Gastrocnemius medialis (tissue), 4 donors: ENCODE measurements at regions of chr17 and their contacts with region 1.

Region 1: DNA sequence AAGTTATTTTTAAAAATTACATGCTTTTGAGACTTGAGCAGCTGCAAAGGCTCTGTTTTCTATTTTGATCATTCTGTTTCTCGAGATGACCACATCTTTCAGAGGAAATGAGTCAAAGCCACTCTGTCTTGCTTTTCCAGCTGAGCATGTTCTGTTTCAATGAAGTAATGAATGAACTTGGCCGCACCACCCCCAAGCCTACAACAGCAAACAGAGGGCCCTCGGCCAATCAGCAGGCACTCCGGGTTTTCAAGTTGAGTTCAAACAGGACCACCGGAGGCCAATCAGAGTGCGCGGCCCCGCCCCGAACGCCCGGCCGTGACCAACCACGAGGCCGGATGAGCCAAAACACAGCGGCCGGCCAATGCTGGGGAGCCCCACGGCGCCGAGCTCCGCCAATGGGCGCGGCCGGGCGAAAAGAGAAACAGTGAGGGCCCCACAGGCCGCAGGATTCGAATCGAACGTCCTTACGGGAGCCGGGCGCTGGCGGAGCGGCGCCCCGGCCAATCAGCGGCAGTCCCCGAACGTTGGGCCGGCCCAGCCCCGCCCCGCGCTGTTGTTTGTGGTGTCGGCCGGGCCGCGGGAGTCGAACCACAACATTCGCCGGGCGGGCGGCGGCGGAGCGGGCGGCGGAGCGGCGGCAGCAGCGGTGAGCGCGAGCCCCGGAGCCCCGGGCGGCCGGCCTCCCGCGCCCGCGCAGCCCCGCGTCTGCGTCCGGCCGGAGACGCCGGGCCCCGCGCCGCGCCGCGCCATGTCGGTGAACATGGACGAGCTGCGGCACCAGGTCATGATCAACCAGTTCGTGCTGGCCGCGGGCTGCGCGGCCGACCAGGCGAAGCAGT is at the start of gene UBALD2:
- DNase-seq: peak; percentile 99 to 100
- ATAC-seq: peak; percentile 78 to 79
- H3K4me3 ChIP-seq: peak within 1 kb of the TSS; percentile 66 to 89 (median 80)
- H3K27ac ChIP-seq: peak within 1 kb of the TSS; percentile 90 to 98 (median 95)
- H3K4me1 ChIP-seq: peaks cover 52 to 58% of the 10 kb centered on the region in 2 donors
- H3K27me3 ChIP-seq: no peaks in the 10 kb centered on the region
- CTCF ChIP-seq: peak in 1 of 5 experiments; percentile 27
- POLR2A ChIP-seq: peak; percentile 96 to 98
- total RNA-seq, gene UBALD2: 28.9 to 151 (median 52.2) TPM

Region 2: DNA sequence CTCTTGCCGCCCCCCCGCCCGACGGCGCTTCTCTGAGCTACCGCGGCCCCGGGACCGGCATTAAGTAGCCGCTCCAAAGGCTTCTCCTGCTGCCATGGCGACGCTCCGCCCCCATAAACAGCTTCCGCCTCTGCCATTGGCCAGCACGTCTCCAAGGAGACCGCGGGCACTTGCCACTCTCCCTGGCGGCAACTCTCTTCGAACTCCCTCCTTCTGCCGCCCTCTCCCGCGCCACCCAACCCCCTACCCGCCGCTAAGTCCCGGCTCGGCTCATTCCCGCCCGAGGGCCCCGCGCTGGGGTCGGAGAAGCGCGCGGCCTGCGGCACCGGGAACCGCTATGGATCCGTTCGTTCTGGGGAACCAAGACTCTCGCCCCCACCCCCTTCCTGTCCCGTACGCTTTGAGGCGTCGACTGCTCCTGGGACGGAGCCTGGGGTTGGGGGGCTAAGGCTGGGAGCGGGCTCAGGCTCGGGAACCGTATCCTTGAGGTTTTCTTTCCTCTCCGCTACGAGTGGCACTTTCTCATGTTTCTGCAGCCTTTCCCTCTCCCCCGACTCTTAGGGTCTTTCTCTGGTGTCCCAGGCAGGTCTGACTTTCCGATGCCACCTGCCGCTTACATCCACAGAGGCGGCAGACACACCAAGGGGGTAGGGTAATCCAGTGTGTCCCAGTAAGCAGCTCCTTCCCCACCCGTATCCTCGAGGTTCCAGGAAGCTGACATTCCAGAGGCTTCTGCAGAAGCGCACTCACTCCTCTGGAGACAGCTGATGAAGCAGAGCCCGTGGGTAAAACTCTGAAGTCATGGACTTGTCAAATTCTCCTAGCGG is 123.6 kb before region 1 on chr17 and contains the start of gene FOXJ1:
- in situ Hi-C with region 1: no loop called
- intact Hi-C with region 1: no loop called
- DNase-seq: peak; percentile 69 to 86
- ATAC-seq: peak; percentile 84 to 89
- H3K4me3 ChIP-seq: peak within 1 kb of the TSS; percentile 50 to 68 (median 58)
- H3K27ac ChIP-seq: peak within 1 kb of the TSS in 1 of 4 donors; percentile 3
- H3K4me1 ChIP-seq: peaks cover 23 to 28% of the 10 kb centered on the region in 2 donors
- H3K27me3 ChIP-seq: peaks cover 46% of the 10 kb centered on the region in 3 donors
- CTCF ChIP-seq: no peak
- POLR2A ChIP-seq: no peak
- total RNA-seq, gene FOXJ1: 0.16 to 0.62 TPM in 2 of 4 donors, not detected in the others

Region 3: DNA sequence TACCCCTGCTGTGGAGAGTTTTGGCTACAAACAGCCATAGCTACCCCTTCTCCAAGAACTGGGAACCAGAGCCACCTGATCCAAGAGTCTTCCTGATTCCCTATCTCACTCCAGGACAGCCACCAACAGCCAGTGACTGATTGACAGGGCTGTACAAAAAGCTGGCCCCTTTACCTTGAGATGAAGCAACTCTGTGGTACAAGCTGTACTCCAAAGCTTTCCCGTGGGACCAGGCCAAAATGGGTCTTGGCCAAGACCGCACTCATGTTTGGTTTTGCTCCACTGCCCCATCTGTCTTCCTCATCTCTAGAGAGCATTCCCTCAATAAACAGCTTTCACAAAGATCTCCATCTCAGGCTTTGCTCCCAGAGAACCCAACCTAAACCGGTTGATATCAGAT is 68.3 kb before region 1 on chr17:
- in situ Hi-C with region 1: no loop called
- intact Hi-C with region 1: loop called (anchors 5 kb)
- DNase-seq: peak; percentile 93 to 97
- ATAC-seq: peak; percentile 98 to 100
- H3K4me3 ChIP-seq: peak overlapping the region in 1 of 4 donors; percentile 3
- H3K27ac ChIP-seq: peak overlapping the region; percentile 87 to 94 (median 90)
- H3K4me1 ChIP-seq: peaks cover 28 to 43% of the 10 kb centered on the region in 2 donors
- H3K27me3 ChIP-seq: no peaks in the 10 kb centered on the region
- CTCF ChIP-seq: peak in 3 of 5 experiments; percentile 21 to 35 (median 24)
- POLR2A ChIP-seq: peak in 1 of 2 donors; percentile 19

Region 4: DNA sequence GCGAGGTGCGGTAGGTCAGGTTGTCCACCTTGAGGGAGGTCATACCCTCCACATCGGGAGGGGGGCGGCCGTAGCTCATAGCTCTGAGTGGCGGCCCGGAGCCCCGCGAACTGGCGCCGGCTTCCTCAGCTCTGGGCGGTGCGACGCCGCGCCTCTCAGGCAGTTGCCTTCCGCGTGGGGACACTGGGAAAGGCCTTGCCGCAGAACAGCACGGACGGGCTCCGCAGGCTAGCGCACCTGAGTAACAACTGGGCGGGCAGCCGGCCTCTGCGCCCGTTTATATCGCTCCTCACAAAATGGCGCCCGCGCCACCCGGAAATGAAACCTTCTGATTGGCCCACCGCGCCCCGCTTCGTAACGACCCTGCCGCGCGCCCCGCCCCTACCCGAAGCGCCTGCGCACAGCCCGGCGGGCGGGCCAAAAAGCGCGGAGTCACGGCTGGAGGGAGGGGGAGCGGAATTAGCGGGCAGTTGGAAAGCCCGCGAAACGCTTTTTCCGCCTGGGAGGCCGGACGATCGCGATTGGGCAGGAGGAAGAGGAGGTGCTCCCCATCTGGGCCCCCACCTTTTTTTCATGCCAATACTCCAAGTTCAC is 472.2 kb after region 1 on chr17 and contains the start of gene SRSF2:
- in situ Hi-C with region 1: no loop called
- intact Hi-C with region 1: loop called (anchors 10 kb)
- DNase-seq: peak; percentile 97 to 98
- ATAC-seq: peak; percentile 74 to 76
- H3K4me3 ChIP-seq: peak within 1 kb of the TSS; percentile 82 to 99 (median 93)
- H3K27ac ChIP-seq: peak within 1 kb of the TSS; percentile 96 to 99 (median 99)
- H3K4me1 ChIP-seq: peaks cover 63 to 76% of the 10 kb centered on the region in 2 donors
- H3K27me3 ChIP-seq: no peaks in the 10 kb centered on the region
- CTCF ChIP-seq: no peak
- POLR2A ChIP-seq: peak; percentile 99 to 100
- total RNA-seq, gene SRSF2: 75.0 to 148 (median 90.4) TPM